Panc1 (cell line): ENCODE measurements at regions of chr18 and their contacts with region 1.

Region 1: GRCh38 chr18:49841236-49842217 is 28.2 kb upstream of the ACAA2 start:
- DNase-seq: no peak
- ATAC-seq: no peak
- H3K4me3 ChIP-seq: no peak overlapping the region
- H3K27ac ChIP-seq: no peak overlapping the region
- H3K4me1 ChIP-seq: no peaks in the 10 kb centered on the region
- H3K27me3 ChIP-seq: no peaks in the 10 kb centered on the region
- CTCF ChIP-seq: no peak

Region 2: GRCh38 chr18:49728542-49728941 is 113.0 kb before region 1 on chr18:
- CTCF ChIA-PET with region 1: interaction called, 10 read pairs
- POLR2A ChIA-PET with region 1: no interaction called
- in situ Hi-C with region 1: no loop called
- intact Hi-C with region 1: no loop called
- DNase-seq: peak; percentile 18
- ATAC-seq: no peak
- H3K4me3 ChIP-seq: no peak overlapping the region
- H3K27ac ChIP-seq: no peak overlapping the region
- H3K4me1 ChIP-seq: peaks cover 7% of the 10 kb centered on the region
- H3K27me3 ChIP-seq: no peaks in the 10 kb centered on the region
- CTCF ChIP-seq: peak; percentile 67

Region 3: DNA sequence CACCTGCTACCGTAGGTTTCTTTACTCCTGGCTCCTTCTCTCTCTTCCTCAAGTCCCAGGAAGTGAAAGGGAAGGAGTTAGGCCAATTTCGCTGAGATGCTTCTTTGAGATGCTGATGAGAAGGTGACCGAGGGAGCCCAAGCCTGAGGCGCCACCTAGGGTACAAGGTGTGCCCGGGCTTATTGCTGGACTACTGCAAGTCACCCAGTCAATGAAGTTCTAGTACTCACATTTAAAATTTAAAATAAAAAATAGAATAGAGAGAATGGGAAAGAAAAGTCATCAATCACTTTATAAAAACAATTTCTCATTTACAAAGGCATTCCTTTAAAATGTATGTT is 73.5 kb before region 1 on chr18:
- CTCF ChIA-PET with region 1: no interaction called
- POLR2A ChIA-PET with region 1: no interaction called
- in situ Hi-C with region 1: no loop called
- intact Hi-C with region 1: no loop called
- DNase-seq: peak; percentile 39
- ATAC-seq: peak; percentile 88
- H3K4me3 ChIP-seq: no peak overlapping the region
- H3K27ac ChIP-seq: no peak overlapping the region
- H3K4me1 ChIP-seq: no peaks in the 10 kb centered on the region
- H3K27me3 ChIP-seq: no peaks in the 10 kb centered on the region
- CTCF ChIP-seq: peak; percentile 72

Region 4: GRCh38 chr18:49898421-49898820 is 56.9 kb after region 1 on chr18:
- CTCF ChIA-PET with region 1: no interaction called
- POLR2A ChIA-PET with region 1: no interaction called
- in situ Hi-C with region 1: no loop called
- intact Hi-C with region 1: no loop called
- DNase-seq: no peak
- ATAC-seq: no peak
- H3K4me3 ChIP-seq: no peak overlapping the region
- H3K27ac ChIP-seq: no peak overlapping the region
- H3K4me1 ChIP-seq: no peaks in the 10 kb centered on the region
- H3K27me3 ChIP-seq: no peaks in the 10 kb centered on the region; the same call in 1 of the 2 replicates
- CTCF ChIP-seq: no peak